Gastrocnemius medialis (tissue), 4 donors: ENCODE measurements at regions of chr2 and their contacts with region 1.

Region 1: GRCh38 chr2:236731878-236732580 is 162.4 kb downstream of the ACKR3 start:
- DNase-seq: peak; percentile 85 to 96
- ATAC-seq: peak; percentile 93 to 95
- H3K4me3 ChIP-seq: peak overlapping the region in 1 of 4 donors; percentile 16
- H3K27ac ChIP-seq: peak overlapping the region; percentile 89 to 92 (median 90)
- H3K4me1 ChIP-seq: peaks cover 29 to 31% of the 10 kb centered on the region in 2 donors
- H3K27me3 ChIP-seq: no peaks in the 10 kb centered on the region
- CTCF ChIP-seq: peak in 1 of 5 experiments; percentile 15
- POLR2A ChIP-seq: no peak

Region 2: DNA sequence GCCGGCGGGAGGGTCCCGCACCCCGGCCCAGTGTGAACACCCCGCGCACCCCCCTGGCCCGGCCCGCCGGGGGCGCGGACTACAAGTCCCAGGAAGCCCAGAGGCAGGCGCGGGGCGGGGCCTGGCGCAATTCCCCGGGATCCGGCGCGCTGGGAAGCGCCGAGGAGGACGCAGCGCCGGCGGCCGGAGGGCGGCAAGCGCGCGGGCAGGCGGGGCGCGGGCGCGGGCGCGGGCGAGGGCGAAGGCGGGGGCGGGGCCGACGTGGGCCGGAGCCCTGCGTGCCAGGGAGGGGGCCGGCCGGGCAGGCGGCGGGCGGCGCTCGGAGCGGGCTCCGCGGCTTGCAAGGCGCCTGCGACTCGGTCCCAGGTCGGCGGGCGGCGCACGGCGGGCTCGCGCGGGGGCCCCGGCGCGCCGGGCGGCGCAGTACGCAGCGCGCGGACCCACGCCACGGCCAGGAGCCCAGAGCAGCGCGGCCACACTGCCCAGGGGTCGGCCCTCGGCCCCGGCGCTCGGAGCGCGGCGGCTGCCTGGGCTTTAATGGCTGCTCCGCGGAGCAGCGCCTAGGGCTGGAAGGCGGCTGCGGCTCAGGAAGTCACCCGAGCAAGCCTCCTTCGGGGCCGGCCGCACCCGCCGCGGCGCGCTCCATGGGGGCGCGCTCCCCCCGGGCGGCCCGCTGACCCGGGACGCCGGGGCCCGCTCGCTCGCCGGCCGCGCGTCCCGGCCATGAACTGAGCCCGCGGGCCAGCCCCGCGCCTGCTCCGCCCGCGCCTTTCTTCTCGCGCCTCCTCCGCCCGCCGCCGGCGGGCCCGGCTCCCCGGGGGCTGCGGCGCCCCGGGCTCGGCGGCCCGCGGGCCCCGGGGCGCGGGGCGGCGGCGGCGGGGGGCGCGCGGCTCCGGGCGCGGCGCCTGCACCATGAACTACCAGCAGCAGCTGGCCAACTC is 1238.0 kb before region 1 on chr2 and contains the start of gene AGAP1:
- in situ Hi-C with region 1: no loop called
- intact Hi-C with region 1: no loop called
- DNase-seq: peak; percentile 76 to 86
- ATAC-seq: peak; percentile 85 to 91
- H3K4me3 ChIP-seq: peak within 1 kb of the TSS; percentile 64 to 76 (median 70)
- H3K27ac ChIP-seq: peak within 1 kb of the TSS; percentile 73 to 86 (median 78)
- H3K4me1 ChIP-seq: peaks cover 11 to 30% of the 10 kb centered on the region in 2 donors
- H3K27me3 ChIP-seq: no peaks in the 10 kb centered on the region
- CTCF ChIP-seq: no peak
- POLR2A ChIP-seq: peak; percentile 36 to 37
- total RNA-seq, gene AGAP1: 8.5 to 26.8 (median 14.4) TPM

Region 3: GRCh38 chr2:235977445-235977844 is 754.6 kb before region 1 on chr2:
- in situ Hi-C with region 1: no loop called
- intact Hi-C with region 1: no loop called
- DNase-seq: no peak
- ATAC-seq: no peak
- H3K4me3 ChIP-seq: no peak overlapping the region
- H3K27ac ChIP-seq: no peak overlapping the region
- H3K4me1 ChIP-seq: no peaks in the 10 kb centered on the region
- H3K27me3 ChIP-seq: no peaks in the 10 kb centered on the region
- CTCF ChIP-seq: no peak
- POLR2A ChIP-seq: no peak

Region 4: DNA sequence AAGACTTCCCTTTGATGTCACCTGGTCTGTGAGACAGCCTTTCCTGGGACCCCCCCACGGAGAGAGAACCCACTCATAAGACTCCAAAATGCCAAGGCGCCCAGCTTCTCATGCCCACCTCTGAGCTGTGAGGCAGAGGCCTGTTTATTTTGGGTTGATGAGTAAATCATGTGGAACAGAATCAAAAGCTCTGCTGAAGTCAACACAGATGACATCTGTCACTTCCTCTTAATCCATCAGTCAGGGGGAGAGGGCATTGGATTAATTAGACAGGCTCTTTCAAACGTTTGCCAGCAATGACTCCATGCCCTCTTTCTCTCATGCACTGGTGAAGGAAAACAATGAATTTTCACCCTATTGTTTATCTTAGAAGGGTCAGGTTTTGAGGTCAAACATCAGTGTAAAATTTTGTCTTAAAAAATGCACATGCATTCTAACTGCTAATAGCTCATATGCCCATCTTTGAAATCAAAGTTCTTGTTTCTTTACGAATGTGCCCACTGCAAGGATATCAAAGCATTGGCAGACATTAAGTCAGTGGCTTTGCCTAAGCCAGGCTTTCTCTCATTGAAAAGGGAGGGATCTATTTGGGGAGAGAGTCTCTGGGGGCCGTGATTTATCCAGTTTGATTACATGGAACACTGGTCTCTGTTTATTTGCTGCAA is 21.7 kb after region 1 on chr2:
- in situ Hi-C with region 1: no loop called
- intact Hi-C with region 1: loop called (anchors 1 kb)
- DNase-seq: no peak
- ATAC-seq: peak; percentile 88 to 96
- H3K4me3 ChIP-seq: no peak overlapping the region
- H3K27ac ChIP-seq: peak overlapping the region; percentile 70 to 77 (median 72)
- H3K4me1 ChIP-seq: peaks cover 21 to 26% of the 10 kb centered on the region in 2 donors
- H3K27me3 ChIP-seq: no peaks in the 10 kb centered on the region
- CTCF ChIP-seq: no peak
- POLR2A ChIP-seq: peak in 1 of 2 donors; percentile 18

Region 5: DNA sequence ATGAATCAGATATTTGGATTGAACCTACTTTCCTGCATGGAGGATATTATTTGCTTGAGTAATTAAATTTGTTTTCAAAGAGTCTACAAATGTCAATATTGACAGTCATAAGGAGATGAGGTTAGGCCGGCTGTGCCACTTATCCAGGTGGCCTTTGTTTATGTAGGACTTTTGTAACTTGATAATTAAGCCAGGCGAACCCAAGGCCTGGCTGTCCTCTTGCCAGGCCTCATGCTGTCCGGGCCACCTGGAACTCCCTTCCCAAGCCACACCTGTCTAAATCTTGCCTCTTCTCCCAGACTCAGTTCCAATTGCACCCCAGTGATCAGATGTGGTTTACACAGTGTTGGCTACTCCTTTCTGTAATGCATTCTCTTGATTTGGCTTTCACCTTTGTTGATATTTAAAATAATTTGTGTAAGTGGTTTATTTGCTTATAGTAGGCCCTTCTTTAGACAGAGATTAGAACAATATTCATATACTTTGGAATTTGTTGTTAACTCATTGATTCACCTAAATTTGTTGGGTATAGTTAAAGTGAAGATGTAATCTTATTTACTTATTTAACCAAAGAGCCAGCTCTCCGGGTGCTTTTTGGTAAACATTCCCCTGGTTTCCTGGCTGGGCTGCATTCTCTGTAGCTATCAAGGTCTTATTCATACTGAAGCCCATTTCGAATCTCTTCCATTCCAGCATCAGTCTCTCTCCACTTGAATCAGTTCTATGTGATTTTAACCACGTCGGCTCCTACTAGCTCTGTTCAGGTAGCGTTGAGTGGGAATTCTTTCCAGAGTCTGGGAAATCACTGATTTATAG is 93.1 kb after region 1 on chr2:
- in situ Hi-C with region 1: no loop called
- intact Hi-C with region 1: loop called (anchors 1 kb)
- DNase-seq: peak; percentile 20 to 51
- ATAC-seq: peak in 1 of 2 donors; percentile 70
- H3K4me3 ChIP-seq: no peak overlapping the region
- H3K27ac ChIP-seq: peak overlapping the region in 3 of 4 donors; percentile 23 to 49 (median 39)
- H3K4me1 ChIP-seq: peaks cover 11 to 20% of the 10 kb centered on the region in 2 donors
- H3K27me3 ChIP-seq: no peaks in the 10 kb centered on the region
- CTCF ChIP-seq: no peak
- POLR2A ChIP-seq: no peak

Region 6: GRCh38 chr2:237085248-237086221 is 353.5 kb after region 1 on chr2 and contains the start of gene COPS8:
- in situ Hi-C with region 1: no loop called
- intact Hi-C with region 1: loop called (anchors 5 kb)
- DNase-seq: peak; percentile 93 to 95
- ATAC-seq: peak; percentile 87 to 94
- H3K4me3 ChIP-seq: peak within 1 kb of the TSS; percentile 76 to 94 (median 77)
- H3K27ac ChIP-seq: peak within 1 kb of the TSS; percentile 93 to 95 (median 94)
- H3K4me1 ChIP-seq: peaks cover 46 to 51% of the 10 kb centered on the region in 2 donors
- H3K27me3 ChIP-seq: no peaks in the 10 kb centered on the region
- CTCF ChIP-seq: peak; percentile 30 to 47 (median 44)
- POLR2A ChIP-seq: peak; percentile 99
- total RNA-seq, gene COPS8: 353 to 709 (median 642) TPM